H1 (cell line): ENCODE measurements at regions of chr7 and their contacts with region 1.

Region 1: DNA sequence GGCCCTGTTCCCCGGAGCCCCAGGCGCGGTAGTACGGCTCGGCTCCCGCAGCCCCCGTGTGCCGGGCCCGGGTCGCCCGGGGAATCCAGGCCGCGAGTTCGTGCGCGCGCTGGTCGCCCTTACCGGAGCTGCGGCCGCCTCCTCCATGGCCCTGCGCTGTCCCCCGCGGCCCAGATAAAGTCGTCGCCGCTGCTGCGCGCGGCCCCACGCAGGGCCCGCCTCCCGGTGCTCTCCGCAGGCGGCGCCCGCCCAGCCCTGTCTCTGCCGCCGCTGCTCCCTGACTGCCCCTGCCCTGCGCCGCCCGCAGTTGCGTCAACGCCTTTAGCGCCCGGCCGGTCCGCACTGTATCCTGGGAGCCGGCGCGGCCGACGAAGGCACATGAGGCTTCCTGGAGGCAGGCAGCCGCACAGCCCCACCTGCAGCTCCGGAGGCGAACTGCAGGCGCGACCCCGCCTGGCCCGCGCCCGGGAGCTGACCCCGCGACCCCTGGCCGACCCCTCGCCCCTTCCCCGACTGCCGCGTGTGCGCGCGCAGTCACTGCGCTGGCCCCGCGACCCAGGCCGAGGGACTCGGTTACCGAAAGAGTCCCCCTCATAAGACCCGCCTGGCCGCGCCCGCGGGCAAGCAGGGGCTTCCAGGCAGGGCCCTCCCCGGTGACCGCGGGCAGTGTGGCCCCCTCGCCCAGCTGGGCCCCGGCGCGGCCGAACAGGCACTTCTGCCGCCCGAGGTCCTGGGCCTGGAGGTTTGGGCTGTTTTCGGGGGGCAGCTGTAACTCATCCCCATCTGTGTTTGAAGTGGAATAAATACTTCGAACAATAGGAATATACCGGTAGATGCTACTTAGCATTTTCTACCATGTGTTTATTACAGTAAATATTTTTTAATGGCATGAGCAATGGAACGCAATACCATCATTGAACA is 127.1 kb upstream of the ZNF746 start:
- DNase-seq: peak; percentile 72 to 99
- H3K4me3 ChIP-seq: peak overlapping the region; percentile 70 to 95 (median 75)
- H3K27ac ChIP-seq: no peak overlapping the region
- H3K4me1 ChIP-seq: peaks cover 0 to 2% (median 0%) of the 10 kb centered on the region in 4 experiments; a peak in 3 of 7 replicates
- H3K27me3 ChIP-seq: no peaks in the 10 kb centered on the region
- CTCF ChIP-seq: peak; percentile 84 to 89 (median 87)
- EP300 ChIP-seq: no peak
- POLR2A ChIP-seq: peak in 1 of 2 experiments; percentile 79; a peak in 2 of 3 replicates
- RAD21 ChIP-seq: peak; percentile 7 to 43; a peak in 2 of 4 replicates

Region 2: DNA sequence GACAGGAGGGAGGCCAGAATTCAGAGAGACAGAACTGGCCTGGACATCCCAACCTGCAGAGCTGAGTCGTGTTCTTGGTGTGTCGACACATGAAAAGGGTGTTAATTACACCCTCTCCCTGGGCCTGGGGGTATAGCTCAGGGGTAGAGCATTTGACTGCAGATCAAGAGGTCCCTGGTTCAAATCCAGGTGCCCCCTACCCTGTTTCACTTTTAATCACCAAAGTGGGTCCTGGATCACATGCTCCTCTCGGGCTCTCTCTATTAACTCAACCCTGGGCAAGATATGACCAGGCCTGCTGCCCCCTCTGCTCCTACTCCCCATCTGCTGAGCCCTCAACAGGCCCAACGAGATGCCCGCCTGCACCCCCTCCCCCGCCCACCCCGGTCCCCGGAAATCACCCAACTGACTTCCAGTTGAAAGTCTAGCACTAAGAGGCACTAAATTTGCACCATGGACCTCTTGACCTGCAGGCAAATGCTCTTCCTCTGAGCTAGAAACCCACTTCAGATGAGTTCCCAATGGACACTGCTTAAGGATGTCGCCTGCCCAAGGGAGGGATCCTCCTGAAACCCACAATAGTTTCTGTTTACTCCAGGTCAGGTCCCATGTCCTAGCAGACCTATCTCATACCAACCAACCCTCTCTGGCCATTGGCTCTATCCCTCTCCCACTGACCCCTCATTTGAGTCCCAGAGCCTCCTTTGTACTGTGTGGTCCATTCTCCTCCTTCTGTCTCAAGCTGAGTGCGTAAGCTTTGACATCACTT is 11.1 kb after region 1 on chr7:
- CTCF ChIA-PET with region 1: interaction called, 15 read pairs
- POLR2A ChIA-PET with region 1: interaction called, 5 read pairs
- DNase-seq: peak; percentile 73 to 86
- H3K4me3 ChIP-seq: peak overlapping the region in 3 of 4 experiments; percentile 1 to 31 (median 2); a peak in 1 of 8 replicates
- H3K27ac ChIP-seq: no peak overlapping the region
- H3K4me1 ChIP-seq: peaks cover 0 to 4% (median under 1%) of the 10 kb centered on the region in 4 experiments; a peak in 1 of 7 replicates
- H3K27me3 ChIP-seq: peaks cover 0 to 4% (median under 1%) of the 10 kb centered on the region in 4 experiments; a peak in 4 of 7 replicates
- CTCF ChIP-seq: no peak
- EP300 ChIP-seq: no peak
- POLR2A ChIP-seq: no peak
- RAD21 ChIP-seq: no peak